PC-3 (cell line): ENCODE measurements at regions of chr5 and their contacts with region 1.

Region 1: DNA sequence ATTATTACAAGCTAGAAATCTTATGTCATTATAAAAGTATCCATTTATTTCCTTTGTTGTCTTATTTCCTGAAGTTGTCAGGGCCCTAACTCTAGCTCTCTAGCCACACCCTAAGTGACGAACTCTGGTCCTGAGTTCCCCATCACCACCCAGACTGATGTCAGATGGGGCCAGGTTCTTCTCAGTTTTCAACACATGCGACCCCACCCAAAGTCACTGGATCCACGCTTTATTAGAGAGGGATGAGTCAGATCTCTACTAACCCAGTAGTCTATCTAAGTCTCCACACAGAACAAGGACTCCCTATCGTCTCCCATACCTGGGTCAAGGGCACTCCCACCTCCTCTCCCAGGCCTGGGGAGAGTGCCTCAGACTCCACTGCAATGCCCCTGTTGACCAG is 6.8 kb upstream of the FEM1C start:
- DNase-seq: peak; percentile 52
- ATAC-seq: peak; percentile 90
- H3K4me3 ChIP-seq: no peak overlapping the region
- H3K27ac ChIP-seq: no peak overlapping the region
- H3K4me1 ChIP-seq: peaks cover 12% of the 10 kb centered on the region; the same call in 1 of the 2 replicates
- H3K27me3 ChIP-seq: no peaks in the 10 kb centered on the region
- CTCF ChIP-seq: no peak

Region 2: GRCh38 chr5:115579747-115580173 is 28.3 kb after region 1 on chr5:
- CTCF ChIA-PET with region 1: no interaction called
- POLR2A ChIA-PET with region 1: no interaction called
- intact Hi-C with region 1: loop called (anchors 2 kb)
- DNase-seq: peak; percentile 71
- ATAC-seq: peak; percentile 89
- H3K4me3 ChIP-seq: no peak overlapping the region
- H3K27ac ChIP-seq: peak overlapping the region; percentile 21; the same call in 1 of the 2 replicates
- H3K4me1 ChIP-seq: peaks cover 42% of the 10 kb centered on the region
- H3K27me3 ChIP-seq: no peaks in the 10 kb centered on the region
- CTCF ChIP-seq: no peak